ENCODE measurements at regions of chr13 and their contacts with region 1.

Region 1: DNA sequence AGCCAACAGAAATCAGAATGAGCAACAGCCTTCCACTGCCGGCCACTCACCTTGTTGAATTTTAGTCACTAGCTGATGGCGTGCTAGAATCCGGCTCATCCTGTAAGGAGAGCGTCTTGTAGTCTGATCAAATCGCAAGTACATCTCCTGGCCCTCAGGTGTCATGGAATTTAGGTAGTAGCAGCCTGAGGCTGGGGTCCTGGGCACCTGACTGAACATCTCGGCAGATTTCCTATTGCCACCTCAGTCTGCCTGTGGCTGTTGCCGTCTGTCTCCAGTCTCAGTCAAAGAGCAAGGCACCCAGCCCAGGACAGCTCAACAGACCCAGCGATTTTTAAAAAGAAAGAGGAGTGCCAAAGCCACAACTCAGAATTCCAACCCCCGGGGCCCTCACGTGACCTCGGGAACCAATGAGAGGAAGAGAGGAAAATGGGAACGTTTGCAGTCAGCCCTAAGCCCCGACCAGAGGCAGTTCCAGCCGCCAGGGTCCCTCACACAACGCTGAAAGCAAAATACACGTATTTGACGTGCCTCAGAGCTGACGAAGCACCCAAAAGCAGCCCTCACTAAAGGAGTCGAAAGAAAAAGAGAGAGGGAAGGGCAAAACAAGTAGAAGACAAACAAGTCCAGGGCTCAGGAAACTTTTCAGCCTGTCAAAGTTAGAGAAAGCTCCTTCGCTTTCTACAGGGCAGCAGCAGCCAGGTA is at the start of gene STARD13:
- DNase-seq: peak; percentile 94 to 96
- H3K4me3 ChIP-seq: peak within 1 kb of the TSS; percentile 49
- H3K4me3 Mint-ChIP-seq: peak within 1 kb of the TSS; percentile 86
- H3K27ac Mint-ChIP-seq: peak within 1 kb of the TSS; percentile 96
- H3K4me1 ChIP-seq: peaks cover 7% of the 10 kb centered on the region; the same call in 1 of the 2 replicates
- H3K4me1 Mint-ChIP-seq: peaks cover 11% of the 10 kb centered on the region
- H3K27me3 ChIP-seq: no peaks in the 10 kb centered on the region
- H3K27me3 Mint-ChIP-seq: no peaks in the 10 kb centered on the region
- CTCF ChIP-seq: peak; percentile 15 to 44
- total RNA-seq, gene STARD13: 9.1 and 12.9 TPM in 2 replicates

Region 2: GRCh38 chr13:33296793-33297425 is 11.3 kb after region 1 on chr13:
- CTCF ChIA-PET with region 1: no interaction called
- POLR2A ChIA-PET with region 1: no interaction called
- intact Hi-C with region 1: loop called (anchors 1 kb)
- DNase-seq: peak; percentile 48 to 69
- H3K4me3 ChIP-seq: no peak overlapping the region
- H3K4me3 Mint-ChIP-seq: peak overlapping the region; percentile 11
- H3K27ac Mint-ChIP-seq: peak overlapping the region; percentile 72
- H3K4me1 ChIP-seq: peaks cover 22% of the 10 kb centered on the region
- H3K4me1 Mint-ChIP-seq: peaks cover 15% of the 10 kb centered on the region
- H3K27me3 ChIP-seq: no peaks in the 10 kb centered on the region
- H3K27me3 Mint-ChIP-seq: no peaks in the 10 kb centered on the region
- CTCF ChIP-seq: no peak